Astrocyte of the cerebellum (primary cell): ENCODE measurements at regions of chr12 and their contacts with region 1.

Region 1: DNA sequence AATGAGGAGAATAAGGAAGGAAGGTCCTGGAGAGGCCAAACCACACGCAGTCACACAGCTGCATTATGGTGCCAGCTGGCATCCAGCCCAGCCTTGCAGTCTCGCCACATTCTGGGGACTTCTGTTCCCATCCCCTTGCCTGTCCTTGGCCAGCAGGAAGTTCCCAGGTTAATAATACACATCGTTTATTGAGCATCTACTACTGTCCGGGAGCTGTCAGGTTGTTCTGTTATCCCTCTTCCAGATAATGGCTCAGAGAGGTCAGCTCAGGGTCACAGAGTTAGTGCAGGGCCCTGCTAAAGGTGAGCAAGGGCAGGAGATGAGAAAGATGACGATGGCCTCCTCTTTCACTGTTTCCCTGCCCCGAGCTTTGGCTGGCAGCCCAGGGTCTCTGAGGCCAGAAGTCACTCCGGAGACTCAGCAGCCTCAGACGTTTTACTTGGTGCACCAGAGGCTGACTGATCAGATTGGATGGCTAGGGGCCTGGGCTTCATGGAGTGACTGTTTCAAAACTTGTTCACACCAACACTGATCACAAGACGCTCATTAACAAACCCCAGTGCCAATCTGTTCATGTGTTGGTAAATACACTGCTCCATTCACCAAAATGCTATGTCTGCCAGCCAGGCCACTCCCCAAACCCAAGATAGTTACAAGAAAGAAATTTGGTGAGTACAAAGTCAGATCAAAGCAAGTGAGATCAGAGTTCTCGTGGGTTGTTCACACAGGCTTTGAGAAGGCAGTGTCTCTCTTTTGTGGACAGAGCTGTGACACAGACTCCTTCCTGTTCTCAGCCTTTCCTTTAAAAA is 79.2 kb downstream of the B4GALNT3 start:
- DNase-seq: peak; percentile 4
- H3K4me3 ChIP-seq: no peak overlapping the region
- CTCF ChIP-seq: no peak

Region 2: DNA sequence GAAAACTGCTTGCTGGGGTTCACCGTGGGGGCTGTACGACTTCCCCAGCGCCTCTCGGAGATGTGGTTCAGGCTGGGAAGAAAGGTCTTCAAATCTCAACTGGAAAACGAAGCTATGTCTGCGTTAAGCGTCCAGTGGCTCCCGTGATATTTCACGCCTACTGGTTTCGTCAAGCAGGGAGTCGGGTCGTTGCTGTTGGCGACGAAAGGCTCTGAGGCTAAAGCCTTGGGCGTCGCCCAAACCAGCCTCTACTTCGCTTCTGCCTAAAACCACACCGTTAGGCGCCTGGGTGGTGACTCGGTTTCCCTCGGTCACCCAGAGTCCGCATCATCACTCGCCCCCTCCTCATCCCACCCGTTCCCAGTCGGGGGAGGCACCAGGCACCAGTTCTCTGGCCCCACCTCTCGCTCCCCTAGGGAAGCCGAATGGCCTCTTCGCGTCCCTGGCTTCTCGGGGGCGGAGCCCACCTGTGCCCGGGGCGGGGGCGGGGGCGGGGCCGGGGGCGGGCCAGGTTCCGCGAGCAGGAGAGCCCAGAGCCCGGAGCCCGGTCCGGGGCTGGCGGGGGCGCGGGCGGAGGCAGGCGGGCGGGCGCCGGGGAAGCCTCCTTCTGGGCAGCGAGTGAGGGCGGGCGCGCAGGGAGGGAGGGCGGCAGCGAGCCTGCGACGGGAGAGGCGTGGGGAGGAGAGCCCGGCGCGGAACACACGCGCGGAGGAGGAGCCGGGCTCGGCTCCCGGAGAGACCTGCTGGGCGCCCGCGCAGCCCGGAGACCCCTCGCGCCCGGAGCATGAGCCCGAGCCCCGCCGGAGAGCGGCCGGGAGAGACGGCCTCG is 79.3 kb before region 1 on chr12 and contains the start of gene B4GALNT3:
- in situ Hi-C with region 1: loop called (anchors 5 kb)
- DNase-seq: no peak
- H3K4me3 ChIP-seq: peak within 1 kb of the TSS; percentile 37
- CTCF ChIP-seq: no peak

Region 3: GRCh38 chr12:475291-475690 is 63.6 kb before region 1 on chr12:
- in situ Hi-C with region 1: loop called (anchors 5 kb)
- DNase-seq: no peak
- H3K4me3 ChIP-seq: no peak overlapping the region
- CTCF ChIP-seq: no peak

Region 4: GRCh38 chr12:490260-490659 is 48.7 kb before region 1 on chr12:
- in situ Hi-C with region 1: no loop called
- DNase-seq: no peak
- H3K4me3 ChIP-seq: no peak overlapping the region
- CTCF ChIP-seq: no peak